A673 (cell line): ENCODE measurements at regions of chr3 and their contacts with region 1.

Region 1: DNA sequence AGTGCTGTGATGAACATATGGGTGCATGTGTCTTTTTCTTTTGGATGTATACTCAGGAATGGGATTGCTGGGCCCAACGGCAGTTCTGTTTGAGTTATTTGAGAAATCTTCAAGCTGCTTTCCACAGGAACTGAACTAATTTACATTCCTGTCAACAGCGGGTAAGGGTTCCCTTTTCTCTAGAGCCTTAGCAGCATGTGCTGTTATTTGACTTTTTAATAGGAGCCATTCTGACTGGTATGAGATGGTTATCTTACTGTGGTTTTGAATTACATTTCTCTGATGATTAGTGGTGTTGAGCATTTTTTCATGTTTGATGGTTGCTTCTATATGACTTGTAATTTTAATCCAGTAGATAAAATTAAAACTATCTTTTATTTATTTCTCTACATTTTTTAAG is 1168.6 kb upstream of the ALCAM start:
- DNase-seq: peak; percentile 55
- H3K4me3 ChIP-seq: no peak overlapping the region
- H3K27ac ChIP-seq: no peak overlapping the region
- H3K4me1 ChIP-seq: no peaks in the 10 kb centered on the region
- H3K27me3 ChIP-seq: no peaks in the 10 kb centered on the region
- CTCF ChIP-seq: no peak

Region 2: GRCh38 chr3:104180906-104181305 is 17.2 kb before region 1 on chr3:
- CTCF ChIA-PET with region 1: no interaction called
- POLR2A ChIA-PET with region 1: interaction called, 21 read pairs
- intact Hi-C with region 1: no loop called
- DNase-seq: no peak
- H3K4me3 ChIP-seq: no peak overlapping the region
- H3K27ac ChIP-seq: no peak overlapping the region
- H3K4me1 ChIP-seq: peaks cover 6% of the 10 kb centered on the region
- H3K27me3 ChIP-seq: no peaks in the 10 kb centered on the region
- CTCF ChIP-seq: no peak